Activated CD4-positive, alpha-beta T cell treated with anti-CD3 and anti-CD28 coated beads for 36 hours (primary cell): ENCODE measurements at regions of chr9 and their contacts with region 1.

Region 1: GRCh38 chr9:89549031-89549644 is 51.2 kb upstream of the SEMA4D start:
- DNase-seq: peak; percentile 94
- ATAC-seq: peak; percentile 100
- H3K4me3 Mint-ChIP-seq: no peak overlapping the region
- H3K27ac Mint-ChIP-seq: no peak overlapping the region
- H3K4me1 Mint-ChIP-seq: peaks cover 22% of the 10 kb centered on the region
- H3K27me3 Mint-ChIP-seq: no peaks in the 10 kb centered on the region

Region 2: GRCh38 chr9:89318123-89319014 is 230.8 kb before region 1 on chr9 and contains the start of gene SECISBP2:
- CTCF ChIA-PET with region 1: interaction called, 3 read pairs
- POLR2A ChIA-PET with region 1: no interaction called
- intact Hi-C with region 1: loop called (anchors 1 to 2 kb)
- DNase-seq: peak; percentile 97
- ATAC-seq: peak; percentile 90
- H3K4me3 Mint-ChIP-seq: peak within 1 kb of the TSS; percentile 82
- H3K27ac Mint-ChIP-seq: peak within 1 kb of the TSS; percentile 98
- H3K4me1 Mint-ChIP-seq: peaks cover 79% of the 10 kb centered on the region
- H3K27me3 Mint-ChIP-seq: no peaks in the 10 kb centered on the region
- total RNA-seq, gene SECISBP2: 38.6 to 49.9 TPM

Region 3: GRCh38 chr9:89428901-89429890 is 119.9 kb before region 1 on chr9:
- CTCF ChIA-PET with region 1: interaction called, 88 read pairs
- POLR2A ChIA-PET with region 1: interaction called, 8 read pairs
- intact Hi-C with region 1: loop called (anchors 1 to 5 kb)
- DNase-seq: peak; percentile 75
- ATAC-seq: peak; percentile 47
- H3K4me3 Mint-ChIP-seq: no peak overlapping the region
- H3K27ac Mint-ChIP-seq: peak overlapping the region; percentile 88
- H3K4me1 Mint-ChIP-seq: peaks cover 97% of the 10 kb centered on the region
- H3K27me3 Mint-ChIP-seq: no peaks in the 10 kb centered on the region

Region 4: DNA sequence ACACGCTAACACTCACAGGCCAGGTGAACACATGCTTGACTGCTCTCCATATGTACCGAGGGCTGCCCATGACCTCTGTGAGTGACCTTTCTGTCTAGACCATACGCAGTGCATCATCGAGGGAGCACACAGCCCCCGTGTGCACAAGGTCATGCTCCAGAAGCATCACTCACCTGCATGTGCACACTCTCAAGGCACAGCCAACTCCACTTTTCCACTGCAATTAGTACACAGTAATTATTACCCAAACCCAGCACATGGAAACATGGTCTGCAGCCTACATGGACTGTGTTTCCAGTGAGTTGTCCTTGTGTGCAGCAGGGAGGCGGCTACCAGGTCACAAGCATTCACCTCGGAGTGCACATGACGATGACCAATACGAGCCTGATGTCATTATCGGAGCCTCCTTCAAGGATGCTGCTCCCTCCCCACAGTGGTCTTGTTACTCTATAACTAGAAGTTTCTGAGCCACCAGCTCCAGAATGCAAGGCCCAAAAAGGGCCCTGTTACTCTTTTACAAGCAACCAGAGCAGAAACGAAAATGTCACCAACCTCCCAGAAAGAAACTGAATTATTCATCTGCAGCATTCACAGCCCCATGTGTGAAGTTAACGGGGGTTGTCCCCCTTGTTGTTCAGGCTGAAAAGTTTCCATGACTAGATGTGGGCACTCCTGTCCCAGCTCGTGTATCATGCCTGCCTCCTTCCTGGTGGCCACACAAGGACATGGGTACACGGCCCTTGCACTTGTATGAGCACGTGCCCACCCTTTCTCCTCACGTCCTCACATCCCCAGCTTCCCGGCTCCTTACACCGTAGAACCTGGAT is 82.5 kb before region 1 on chr9:
- CTCF ChIA-PET with region 1: interaction called, 8 read pairs
- POLR2A ChIA-PET with region 1: interaction called, 4 read pairs
- intact Hi-C with region 1: loop called in 1 of 2 experiments (anchors 1 kb)
- DNase-seq: peak; percentile 80
- ATAC-seq: peak; percentile 73
- H3K4me3 Mint-ChIP-seq: peak overlapping the region; percentile 62
- H3K27ac Mint-ChIP-seq: peak overlapping the region; percentile 95
- H3K4me1 Mint-ChIP-seq: peaks cover 96% of the 10 kb centered on the region
- H3K27me3 Mint-ChIP-seq: no peaks in the 10 kb centered on the region

Region 5: DNA sequence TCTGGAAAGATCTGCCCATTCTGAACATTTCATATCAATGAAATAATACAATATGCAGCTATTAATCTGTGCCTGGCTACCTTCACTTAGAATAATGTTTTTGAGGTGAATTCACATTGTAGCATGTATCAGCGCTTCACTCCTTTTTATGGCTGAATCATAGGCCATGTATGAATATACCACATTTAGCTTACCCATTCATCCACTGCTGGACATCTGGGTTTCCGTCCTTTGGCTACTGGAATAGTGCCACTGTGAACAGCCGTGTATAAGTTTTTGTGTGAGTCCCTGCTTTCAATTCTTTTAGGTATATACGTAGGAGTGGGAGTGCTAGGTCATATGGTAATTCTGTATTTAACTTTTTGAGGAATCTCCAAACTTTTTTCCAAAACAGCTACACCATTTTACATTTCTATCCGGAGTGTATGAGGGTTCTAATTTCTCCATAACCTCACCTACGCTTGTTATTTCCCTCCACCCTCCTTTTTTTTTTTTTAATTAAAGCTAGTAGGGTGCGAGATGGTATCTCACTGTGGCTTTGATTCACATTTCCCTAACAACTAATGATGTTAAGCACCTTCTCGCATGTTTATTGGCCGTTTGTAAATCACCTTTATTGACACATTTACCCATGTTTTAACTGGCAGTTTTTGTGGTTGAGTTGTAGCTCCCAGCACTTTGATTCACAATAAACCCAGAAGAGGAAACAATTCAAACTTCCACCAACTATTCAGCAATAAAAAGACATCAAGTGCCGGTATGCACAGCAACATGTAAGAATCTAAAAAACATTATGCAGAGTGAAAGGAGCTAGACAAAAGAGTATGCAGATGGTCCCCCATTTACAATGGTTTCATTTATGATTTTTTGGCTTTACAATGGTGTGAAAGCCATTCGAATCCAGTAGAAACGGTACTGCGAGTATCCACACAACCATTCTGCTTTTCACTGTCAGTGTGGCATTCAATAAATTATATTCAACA is 59.3 kb before region 1 on chr9:
- CTCF ChIA-PET with region 1: interaction called, 29 read pairs
- POLR2A ChIA-PET with region 1: interaction called, 3 read pairs
- intact Hi-C with region 1: loop called in 1 of 2 experiments (anchors 2 kb)
- DNase-seq: no peak
- ATAC-seq: peak; percentile 45
- H3K4me3 Mint-ChIP-seq: peak overlapping the region; percentile 51
- H3K27ac Mint-ChIP-seq: peak overlapping the region; percentile 87
- H3K4me1 Mint-ChIP-seq: peaks cover 95% of the 10 kb centered on the region
- H3K27me3 Mint-ChIP-seq: no peaks in the 10 kb centered on the region

Region 6: DNA sequence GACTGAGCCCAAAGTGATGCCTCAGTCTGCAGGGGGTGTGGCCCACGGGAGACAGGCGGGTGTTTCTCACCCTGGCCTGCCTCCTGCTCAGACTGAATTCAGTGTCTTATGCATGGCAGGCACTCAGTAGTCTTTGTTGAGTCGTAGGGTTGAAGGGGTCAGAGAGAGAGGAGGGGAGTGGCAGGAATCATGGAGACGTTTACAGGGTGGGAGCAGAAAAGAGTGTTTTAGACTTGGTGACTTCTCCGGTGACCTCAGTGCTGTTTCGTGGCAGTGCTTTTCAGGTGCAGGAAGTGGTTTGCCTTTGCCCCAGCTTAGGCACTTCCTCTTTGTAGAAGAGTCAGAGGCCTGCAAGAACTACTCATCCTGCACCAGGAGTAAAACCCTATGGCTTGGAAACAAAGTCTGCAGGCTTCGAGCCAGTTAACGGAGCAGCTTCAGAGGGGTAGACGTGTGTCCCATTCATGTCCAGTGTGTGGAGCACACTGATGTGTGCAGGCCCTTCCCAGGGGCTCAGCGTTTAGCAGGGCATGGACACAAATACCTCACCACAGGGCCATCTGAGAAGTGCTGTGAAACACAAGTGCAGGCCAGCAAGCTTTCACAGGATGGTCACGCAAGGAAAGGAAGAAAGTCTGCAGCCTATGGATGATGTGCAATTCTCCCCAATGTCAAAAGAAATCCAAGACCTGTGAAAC is 26.7 kb before region 1 on chr9:
- CTCF ChIA-PET with region 1: interaction called, 47 read pairs
- POLR2A ChIA-PET with region 1: no interaction called
- intact Hi-C with region 1: no loop called
- DNase-seq: peak; percentile 86
- ATAC-seq: peak; percentile 90
- H3K4me3 Mint-ChIP-seq: peak overlapping the region; percentile 62
- H3K27ac Mint-ChIP-seq: peak overlapping the region; percentile 97
- H3K4me1 Mint-ChIP-seq: peaks cover 94% of the 10 kb centered on the region
- H3K27me3 Mint-ChIP-seq: no peaks in the 10 kb centered on the region

Region 7: DNA sequence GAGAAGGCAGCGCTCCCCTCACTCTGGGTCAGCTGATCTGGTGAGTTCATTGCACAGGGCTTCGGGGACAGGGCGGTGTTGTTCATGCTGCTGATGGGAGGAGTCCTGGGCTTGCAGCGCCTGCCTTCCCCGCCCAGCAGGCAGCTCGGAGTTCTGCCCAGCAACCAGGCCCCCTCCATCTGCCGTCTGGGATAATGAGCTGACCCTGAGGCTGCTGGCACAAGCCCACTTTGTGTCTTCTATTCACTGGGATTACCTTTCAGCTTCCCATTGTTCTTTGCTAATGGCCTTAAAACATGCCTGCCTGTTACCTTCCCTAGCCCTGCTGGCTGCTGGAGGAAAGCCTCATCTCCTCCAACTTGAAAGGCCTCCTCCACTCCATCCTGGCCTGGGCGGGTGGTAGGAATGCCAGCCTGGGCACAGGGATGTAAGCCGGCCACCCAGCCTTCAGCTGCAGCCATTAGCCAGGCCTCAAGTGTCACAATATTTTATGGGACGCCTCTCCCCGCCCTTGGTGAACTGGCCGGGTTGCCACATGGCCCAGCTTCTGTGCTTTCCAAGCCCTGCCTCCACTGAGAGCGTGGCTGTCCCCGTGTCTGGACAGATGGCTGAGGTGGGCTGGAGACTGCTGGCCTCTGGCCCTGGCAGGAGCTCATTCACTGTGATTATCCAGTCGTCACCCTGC is 126.1 kb after region 1 on chr9:
- CTCF ChIA-PET with region 1: no interaction called
- POLR2A ChIA-PET with region 1: no interaction called
- intact Hi-C with region 1: no loop called
- DNase-seq: no peak
- ATAC-seq: no peak
- H3K4me3 Mint-ChIP-seq: no peak overlapping the region
- H3K27ac Mint-ChIP-seq: no peak overlapping the region
- H3K4me1 Mint-ChIP-seq: no peaks in the 10 kb centered on the region
- H3K27me3 Mint-ChIP-seq: no peaks in the 10 kb centered on the region